ENCODE measurements at regions of chr15 and their contacts with region 1.

Region 1: GRCh38 chr15:75307778-75308391 is 25.2 kb downstream of the GOLGA6D start:
- DNase-seq: no peak
- H3K4me3 ChIP-seq: no peak overlapping the region
- H3K27ac ChIP-seq: no peak overlapping the region
- H3K4me1 ChIP-seq: no peaks in the 10 kb centered on the region
- H3K27me3 ChIP-seq: no peaks in the 10 kb centered on the region
- CTCF ChIP-seq: peak in 1 of 3 experiments; percentile 9

Region 2: DNA sequence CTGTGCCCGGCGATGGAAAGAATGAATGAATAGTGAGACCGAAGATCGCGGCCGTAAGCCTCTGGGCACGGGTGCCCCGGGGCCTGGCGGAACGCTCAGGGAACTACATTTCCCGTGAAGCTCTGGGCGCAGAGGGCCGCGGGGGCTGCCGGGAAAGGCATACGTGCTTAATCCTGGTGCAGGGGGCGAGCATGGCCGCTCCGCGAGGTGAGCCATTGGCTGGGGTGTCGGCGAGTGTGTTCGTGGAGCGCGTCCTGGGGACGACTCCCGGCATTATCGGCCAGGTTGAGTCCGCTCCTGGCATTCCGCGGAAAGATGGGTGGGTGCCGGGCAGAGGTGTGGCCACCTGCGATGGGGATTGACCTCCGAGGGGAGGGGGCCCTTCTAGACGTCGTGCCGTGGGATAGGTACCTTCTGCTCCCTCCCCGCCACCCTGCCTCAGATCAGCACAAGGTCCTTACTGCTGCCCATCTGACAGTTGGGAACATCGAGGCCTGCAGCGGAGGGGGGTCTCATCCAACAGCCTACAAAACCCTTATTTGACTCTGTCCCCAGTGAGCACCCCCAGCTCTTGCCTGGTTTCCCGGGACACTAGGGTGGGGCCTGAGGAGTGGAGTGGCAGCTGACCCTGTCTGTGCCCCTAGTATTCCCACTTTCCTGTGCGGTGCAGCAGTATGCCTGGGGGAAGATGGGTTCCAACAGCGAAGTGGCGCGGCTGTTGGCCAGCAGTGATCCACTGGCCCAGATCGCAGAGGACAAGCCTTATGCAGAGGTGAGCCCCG is 417.8 kb before region 1 on chr15 and contains the start of gene MPI:
- intact Hi-C with region 1: no loop called
- DNase-seq: peak; percentile 47 to 89
- H3K4me3 ChIP-seq: peak within 1 kb of the TSS; percentile 76 to 85
- H3K27ac ChIP-seq: peak within 1 kb of the TSS; percentile 70 to 76
- H3K4me1 ChIP-seq: peaks cover 4 to 13% of the 10 kb centered on the region in 2 donors
- H3K27me3 ChIP-seq: no peaks in the 10 kb centered on the region
- CTCF ChIP-seq: no peak
- total RNA-seq, gene MPI: 118 TPM

Region 3: DNA sequence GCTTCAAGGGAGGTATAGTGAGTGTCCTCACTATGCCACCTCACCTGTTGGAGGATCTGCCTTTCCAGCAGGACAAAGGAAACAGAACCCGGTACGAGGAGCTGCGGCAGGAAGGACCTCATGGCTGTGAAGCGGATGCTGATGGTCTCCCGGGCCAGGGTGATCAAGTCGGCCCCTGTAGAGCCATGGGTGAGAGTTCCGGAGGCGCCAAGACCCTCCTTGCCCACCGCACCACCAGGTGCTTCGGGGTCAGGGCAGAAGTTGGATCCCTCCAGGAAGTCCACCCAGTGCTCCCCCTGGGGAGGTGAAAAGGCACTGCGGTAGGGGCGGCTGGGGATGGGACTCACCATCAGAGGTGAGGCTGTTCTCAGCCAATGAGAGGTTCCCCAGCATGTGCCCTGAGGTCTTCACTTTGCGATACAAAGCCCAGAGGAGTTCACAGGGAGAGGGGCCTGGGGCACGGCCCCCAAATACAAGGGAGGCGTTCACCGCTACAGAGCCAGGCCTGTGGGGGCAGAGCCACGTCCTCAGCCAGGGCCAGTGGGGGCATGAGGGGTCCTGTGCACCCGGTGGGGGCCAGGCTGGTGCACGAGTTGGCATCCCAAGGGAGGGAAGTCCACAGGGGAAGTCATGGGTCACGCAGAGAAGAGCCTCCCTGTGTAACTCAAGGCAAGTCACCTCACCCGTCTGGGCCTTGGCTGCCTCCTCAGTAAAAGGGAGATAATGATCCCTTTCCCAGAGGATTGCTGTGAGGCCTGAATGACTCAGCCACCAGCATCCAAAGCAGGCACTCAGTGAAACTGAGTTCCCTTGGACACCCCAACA is 78.5 kb before region 1 on chr15:
- intact Hi-C with region 1: loop called (anchors 10 kb)
- DNase-seq: no peak
- H3K4me3 ChIP-seq: no peak overlapping the region
- H3K27ac ChIP-seq: no peak overlapping the region
- H3K4me1 ChIP-seq: no peaks in the 10 kb centered on the region
- H3K27me3 ChIP-seq: no peaks in the 10 kb centered on the region
- CTCF ChIP-seq: no peak